ENCODE measurements at regions of chr21 and their contacts with region 1.

Region 1: DNA sequence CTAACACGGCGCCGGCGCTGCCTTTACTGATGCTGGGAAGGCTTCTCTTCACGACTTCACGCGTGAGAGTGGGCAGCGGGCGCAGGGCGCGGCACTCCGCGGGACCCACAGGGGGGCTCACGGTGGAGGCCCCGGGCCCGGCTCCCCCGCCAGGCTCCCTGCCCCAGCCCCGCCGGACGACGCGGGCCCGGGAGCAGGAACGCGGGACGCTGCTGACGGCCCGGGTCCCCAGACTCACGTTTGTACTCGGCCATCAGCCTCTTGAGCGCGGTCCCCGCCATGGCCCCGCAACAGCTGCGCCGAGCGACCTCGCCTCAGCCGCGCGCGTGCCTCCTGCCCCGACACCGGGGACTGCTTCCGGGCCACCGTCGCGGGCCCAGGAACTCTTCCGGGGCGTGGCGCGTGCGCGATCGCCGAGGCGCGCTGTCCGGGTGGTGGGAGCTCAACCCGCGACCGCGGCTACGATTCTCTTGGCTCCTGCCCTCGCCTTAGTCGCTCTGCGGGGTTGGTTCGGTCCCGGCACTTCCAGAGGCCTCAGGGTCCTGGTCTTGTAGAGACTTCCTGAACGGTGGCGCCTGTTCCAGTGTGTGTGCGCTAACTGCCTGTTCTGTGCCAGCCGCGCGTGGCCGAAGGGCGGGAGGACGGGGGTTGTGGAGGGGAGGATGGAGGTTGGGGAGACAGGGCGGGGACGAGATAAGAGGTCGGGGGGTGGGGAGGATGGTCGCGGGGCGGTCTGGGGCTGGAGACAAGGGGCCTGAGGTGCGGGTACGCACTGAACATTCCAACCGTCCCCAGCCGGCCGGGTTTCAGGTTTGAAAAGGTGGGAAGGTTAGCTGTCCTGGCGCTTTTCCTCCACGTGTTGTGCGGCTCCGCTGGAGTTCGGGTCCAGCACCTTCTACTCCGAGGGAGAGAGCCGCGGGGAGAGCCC is at the start of gene UBE2G2:
- DNase-seq: peak; percentile 98
- H3K4me3 ChIP-seq: peak within 1 kb of the TSS; percentile 60 to 97
- H3K27ac ChIP-seq: peak within 1 kb of the TSS; percentile 36 to 91; a peak in 3 of 4 replicates
- H3K4me1 ChIP-seq: peaks cover 0 to 35% of the 10 kb centered on the region in 2 experiments; a peak in 2 of 4 replicates
- H3K27me3 ChIP-seq: no peaks in the 10 kb centered on the region
- CTCF ChIP-seq: no peak
- EP300 ChIP-seq: no peak
- RAD21 ChIP-seq: no peak
- polyA plus RNA-seq, gene UBE2G2: 129 and 149 TPM in 2 replicates

Region 2: DNA sequence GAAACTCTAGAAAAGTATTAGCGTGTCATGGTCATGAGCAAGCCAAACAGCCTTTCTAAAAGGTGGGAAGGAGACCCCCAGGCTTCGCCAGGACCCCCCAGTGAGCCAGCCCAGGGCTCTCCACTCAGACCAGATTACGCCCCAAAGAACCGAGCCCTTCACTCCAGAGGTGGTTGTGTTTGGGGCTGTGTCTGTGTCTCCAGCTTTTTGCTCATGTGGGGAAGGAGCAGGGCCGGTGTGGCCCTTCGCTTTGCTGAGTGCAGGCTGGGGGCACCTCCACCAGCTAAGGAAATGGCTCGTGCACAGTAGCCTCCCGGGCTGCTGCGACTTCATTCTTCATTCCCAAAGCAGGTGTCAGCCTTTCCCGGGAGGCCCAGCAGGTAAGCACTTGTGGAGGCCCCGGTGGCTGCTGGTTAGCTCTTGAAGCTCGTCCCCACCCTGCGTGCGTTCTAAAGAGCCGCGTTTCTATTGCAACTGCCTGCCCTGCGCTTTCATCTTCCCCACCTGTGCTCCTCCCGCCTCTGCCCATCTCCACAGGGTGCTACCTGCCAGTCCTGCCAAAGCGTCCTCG is 90.9 kb before region 1 on chr21:
- CTCF ChIA-PET with region 1: interaction called, 12 read pairs
- POLR2A ChIA-PET with region 1: no interaction called
- DNase-seq: peak; percentile 16
- H3K4me3 ChIP-seq: no peak overlapping the region
- H3K27ac ChIP-seq: no peak overlapping the region
- H3K4me1 ChIP-seq: no peaks in the 10 kb centered on the region; a peak in 1 of 4 replicates
- H3K27me3 ChIP-seq: peaks cover 86% of the 10 kb centered on the region
- CTCF ChIP-seq: no peak
- EP300 ChIP-seq: no peak
- RAD21 ChIP-seq: no peak

Region 3: DNA sequence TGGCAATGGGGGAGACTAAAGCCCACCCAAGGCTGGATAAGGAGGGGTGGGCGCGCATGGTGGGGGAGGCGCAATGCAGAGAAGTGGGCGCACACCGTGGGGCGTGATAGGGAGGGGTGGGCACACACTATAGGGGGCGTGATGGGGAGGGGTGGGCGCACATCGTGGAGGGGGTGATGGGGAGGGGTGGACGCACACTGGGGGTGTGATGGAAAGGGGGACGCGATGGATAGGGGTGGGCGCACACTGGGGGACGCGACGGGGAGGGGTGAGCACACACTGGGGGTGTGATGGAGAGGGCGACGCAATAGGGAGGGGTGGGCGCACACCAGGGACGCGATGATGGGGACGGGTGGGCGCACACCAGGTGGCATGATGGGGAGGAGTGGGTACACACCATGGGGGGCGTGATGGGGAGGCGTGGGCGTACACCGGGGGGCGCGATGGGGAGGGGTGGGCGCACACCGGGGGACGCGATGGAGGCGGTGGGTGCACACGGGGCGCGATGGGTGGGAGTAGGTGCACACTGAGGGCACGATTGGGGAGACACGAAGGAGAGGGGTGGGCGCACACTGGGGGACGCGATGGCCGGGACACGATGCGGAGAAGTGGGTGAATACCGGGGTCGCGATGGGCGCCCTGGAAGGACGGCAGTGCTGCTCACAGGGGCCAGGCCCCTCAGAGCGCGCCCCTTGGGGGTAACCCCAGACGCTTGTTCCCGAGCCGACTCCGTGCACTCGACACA is 15.2 kb after region 1 on chr21:
- CTCF ChIA-PET with region 1: interaction called, 22 read pairs
- POLR2A ChIA-PET with region 1: interaction called, 14 read pairs
- DNase-seq: peak; percentile 40
- H3K4me3 ChIP-seq: peak overlapping the region; percentile 75 to 87
- H3K27ac ChIP-seq: peak overlapping the region in 1 of 2 experiments; percentile 88; a peak in 2 of 4 replicates
- H3K4me1 ChIP-seq: peaks cover 8 to 28% of the 10 kb centered on the region in 2 experiments; a peak in 3 of 4 replicates
- H3K27me3 ChIP-seq: no peaks in the 10 kb centered on the region
- CTCF ChIP-seq: no peak
- EP300 ChIP-seq: no peak
- RAD21 ChIP-seq: no peak

Region 4: DNA sequence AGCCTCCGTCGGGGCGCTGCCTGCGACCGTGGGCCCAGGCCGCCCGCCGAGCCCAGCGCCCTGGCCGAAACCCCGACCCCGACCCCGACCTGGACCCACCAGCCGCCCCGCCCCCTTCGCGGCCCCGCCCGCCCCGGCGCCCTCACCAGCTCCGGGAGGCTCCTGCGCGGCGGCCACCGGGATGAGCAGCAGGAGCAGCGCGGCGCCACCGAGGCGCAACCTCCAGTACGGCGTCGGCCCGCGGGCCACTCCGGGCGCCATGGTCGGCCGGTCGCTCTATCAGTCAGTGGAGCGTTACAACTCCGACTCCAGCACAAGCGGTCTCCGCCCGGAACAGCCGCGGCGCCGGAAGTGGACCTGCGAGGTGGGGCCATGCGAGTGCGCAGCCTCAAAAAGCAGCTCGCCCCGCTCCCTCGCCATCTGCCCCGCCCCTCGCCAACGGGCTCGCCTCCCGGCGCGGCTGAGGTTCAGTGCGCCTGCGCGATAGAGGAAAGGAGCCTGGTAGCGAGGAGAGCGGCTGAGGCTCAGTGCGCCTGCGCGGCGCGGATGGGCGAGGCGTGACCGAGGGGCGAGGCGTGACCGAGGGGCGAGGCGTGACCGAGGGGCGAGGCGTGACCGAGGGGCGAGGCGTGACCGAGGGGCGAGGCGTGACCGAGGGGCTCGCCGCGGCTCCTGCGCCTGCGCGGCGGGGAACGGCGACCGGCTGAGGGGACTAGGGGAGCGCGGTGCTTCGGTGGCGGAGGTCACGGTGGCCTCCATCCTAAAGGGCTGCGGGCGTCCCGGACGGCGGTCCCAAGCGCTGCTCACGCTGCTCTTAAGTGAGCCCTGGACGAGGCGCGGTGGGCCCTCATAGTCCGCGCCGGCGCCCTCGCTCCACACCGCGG is 71.9 kb after region 1 on chr21 and contains the start of gene PTTG1IP:
- CTCF ChIA-PET with region 1: interaction called, 18 read pairs
- POLR2A ChIA-PET with region 1: interaction called, 7 read pairs
- DNase-seq: peak; percentile 100
- H3K4me3 ChIP-seq: peak within 1 kb of the TSS; percentile 88 to 96
- H3K27ac ChIP-seq: peak within 1 kb of the TSS; percentile 82 to 90; a peak in 3 of 4 replicates
- H3K4me1 ChIP-seq: peaks cover 25 to 38% of the 10 kb centered on the region in 2 experiments
- H3K27me3 ChIP-seq: no peaks in the 10 kb centered on the region
- CTCF ChIP-seq: no peak
- EP300 ChIP-seq: no peak
- RAD21 ChIP-seq: no peak
- polyA plus RNA-seq, gene PTTG1IP: 171 and 196 TPM in 2 replicates

Region 5: GRCh38 chr21:44886113-44887075 is 84.7 kb after region 1 on chr21:
- CTCF ChIA-PET with region 1: interaction called, 11 read pairs
- POLR2A ChIA-PET with region 1: no interaction called
- DNase-seq: no peak
- H3K4me3 ChIP-seq: no peak overlapping the region
- H3K27ac ChIP-seq: no peak overlapping the region
- H3K4me1 ChIP-seq: peaks cover 5% of the 10 kb centered on the region in 2 experiments; a peak in 2 of 4 replicates
- H3K27me3 ChIP-seq: no peaks in the 10 kb centered on the region; the same call in 1 of the 2 replicates
- CTCF ChIP-seq: no peak
- EP300 ChIP-seq: no peak
- RAD21 ChIP-seq: no peak

Region 6: DNA sequence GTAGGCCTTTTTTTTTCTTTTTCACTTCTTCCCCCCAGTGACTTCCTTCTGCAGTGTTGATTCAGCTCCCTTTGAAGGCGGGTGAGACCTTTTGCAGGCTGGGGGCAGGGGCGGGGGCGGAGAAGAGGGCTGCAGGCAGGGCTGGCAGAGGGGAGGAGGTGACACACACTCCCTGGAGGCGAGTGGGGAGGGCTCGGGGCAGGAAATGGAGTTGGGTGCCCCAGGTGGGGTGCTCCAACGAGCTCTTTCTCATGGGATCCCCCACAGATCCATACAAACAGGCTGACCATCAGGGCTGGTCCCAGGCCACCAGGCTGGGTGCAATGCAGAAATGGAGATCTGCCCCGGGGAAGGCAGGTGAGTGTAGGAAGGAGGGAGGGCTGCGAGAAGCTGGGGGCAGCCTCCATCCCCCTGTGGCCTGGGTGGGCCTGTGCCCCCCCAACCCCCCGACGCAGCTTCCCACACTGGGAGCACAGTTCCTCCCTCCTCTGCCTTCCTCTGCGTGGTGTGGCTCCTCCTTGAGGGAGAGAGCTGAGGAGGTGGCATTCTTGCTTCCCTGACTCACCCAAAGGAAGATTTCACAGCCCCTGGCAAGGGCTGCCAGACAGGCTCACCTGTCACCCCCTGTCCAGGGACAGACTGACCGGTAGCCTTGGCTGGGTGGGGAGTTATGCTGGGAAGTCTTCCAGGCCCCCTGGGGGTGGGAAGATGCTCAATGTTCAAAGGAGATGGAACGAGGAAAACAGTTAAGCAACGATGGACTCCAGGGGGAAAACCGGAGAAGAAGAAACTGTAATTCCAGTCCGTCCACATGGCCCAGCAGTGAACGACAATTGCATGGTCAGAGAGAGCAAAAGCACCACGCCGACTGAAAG is 126.1 kb after region 1 on chr21:
- CTCF ChIA-PET with region 1: interaction called, 54 read pairs
- POLR2A ChIA-PET with region 1: interaction called, 4 read pairs
- DNase-seq: no peak
- H3K4me3 ChIP-seq: peak overlapping the region in 1 of 2 experiments; percentile 35; a peak in 2 of 4 replicates
- H3K27ac ChIP-seq: peak overlapping the region in 1 of 2 experiments; percentile 35; a peak in 1 of 4 replicates
- H3K4me1 ChIP-seq: peaks cover 16 to 32% of the 10 kb centered on the region in 2 experiments; a peak in 2 of 4 replicates
- H3K27me3 ChIP-seq: peaks cover 27% of the 10 kb centered on the region
- CTCF ChIP-seq: peak; percentile 16; the same call in 1 of the 2 replicates
- EP300 ChIP-seq: 0 out of 4 replicates have a peak, but pooled peaks of 1 of the 2 experiments have one; percentile 6
- RAD21 ChIP-seq: no peak

Region 7: GRCh38 chr21:45019076-45019956 is 217.6 kb after region 1 on chr21:
- CTCF ChIA-PET with region 1: no interaction called
- POLR2A ChIA-PET with region 1: no interaction called
- DNase-seq: peak; percentile 74
- H3K4me3 ChIP-seq: no peak overlapping the region
- H3K27ac ChIP-seq: no peak overlapping the region
- H3K4me1 ChIP-seq: no peaks in the 10 kb centered on the region; a peak in 1 of 4 replicates
- H3K27me3 ChIP-seq: no peaks in the 10 kb centered on the region
- CTCF ChIP-seq: no peak
- EP300 ChIP-seq: no peak
- RAD21 ChIP-seq: no peak

Measured in SK-N-SH (cell line).